PC-9 (cell line): ENCODE measurements at regions of chr12 and their contacts with region 1.

Region 1: GRCh38 chr12:28489246-28489645 is 299.0 kb downstream of the CCDC91 start:
- DNase-seq: no peak
- H3K4me3 ChIP-seq: no peak overlapping the region
- H3K27ac ChIP-seq: no peak overlapping the region
- H3K4me1 ChIP-seq: no peaks in the 10 kb centered on the region
- H3K27me3 ChIP-seq: no peaks in the 10 kb centered on the region
- CTCF ChIP-seq: no peak

Region 2: DNA sequence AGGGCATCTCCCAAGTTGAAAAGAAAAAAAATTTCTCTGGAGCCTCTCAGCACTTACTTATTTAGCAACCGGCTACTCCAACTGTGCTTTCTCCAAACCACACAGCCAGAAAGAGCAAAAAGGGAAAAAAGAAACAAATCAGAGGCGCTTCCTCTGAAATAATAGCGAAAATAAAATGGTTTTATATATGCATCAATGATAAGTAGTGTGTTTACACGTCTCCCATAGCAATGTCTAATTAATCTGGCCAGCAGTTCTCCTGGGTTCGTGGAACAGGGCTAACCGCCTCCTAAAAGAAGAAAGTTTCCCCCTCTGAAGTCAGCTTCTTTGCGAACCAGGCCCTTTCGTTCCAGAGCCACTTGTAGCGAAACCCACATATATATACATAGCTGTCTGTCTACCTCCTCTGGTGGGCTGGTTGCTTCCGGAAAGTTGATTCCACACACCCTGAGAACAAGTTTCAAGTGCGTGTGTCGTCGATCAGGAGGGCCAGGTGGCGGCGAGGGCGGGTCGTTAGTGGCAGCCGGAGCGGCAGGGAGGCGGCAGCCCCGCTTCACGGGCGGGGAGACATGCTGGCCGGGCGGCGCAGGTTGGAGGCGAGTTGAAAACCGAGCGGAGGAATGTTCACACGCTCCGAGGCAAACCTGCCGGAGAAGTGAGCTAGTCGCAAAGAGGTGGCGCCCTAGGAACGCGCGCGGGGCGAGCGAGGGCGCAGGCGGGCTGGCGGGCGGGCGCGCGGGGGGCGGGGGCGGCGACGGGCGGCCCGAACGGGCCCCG is 519.4 kb before region 1 on chr12:
- CTCF ChIA-PET with region 1: no interaction called
- POLR2A ChIA-PET with region 1: no interaction called
- intact Hi-C with region 1: no loop called
- DNase-seq: peak; percentile 74 to 89
- H3K4me3 ChIP-seq: peak overlapping the region; percentile 65
- H3K27ac ChIP-seq: peak overlapping the region; percentile 33
- H3K4me1 ChIP-seq: peaks cover 42% of the 10 kb centered on the region
- H3K27me3 ChIP-seq: no peaks in the 10 kb centered on the region
- CTCF ChIP-seq: no peak; the same call in 1 of the 2 replicates

Region 3: DNA sequence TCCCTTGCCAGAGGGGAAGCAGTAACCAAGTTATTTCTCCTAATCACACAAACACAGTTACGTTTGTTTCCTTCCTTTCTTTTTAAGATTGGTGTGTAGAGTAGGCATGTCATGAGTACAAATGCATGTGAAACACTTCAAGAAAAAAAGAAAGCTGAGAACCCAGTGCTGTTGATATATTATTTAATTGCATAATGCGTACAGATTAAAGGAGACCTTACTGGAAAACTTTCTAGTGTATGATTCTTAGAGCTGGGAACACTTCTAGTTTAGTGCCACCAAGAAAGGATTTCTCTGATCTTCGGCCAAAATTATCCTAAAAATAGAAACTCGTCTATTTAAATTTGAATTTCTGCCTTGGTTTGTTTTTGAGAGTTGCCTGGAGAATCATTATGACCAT is 66.5 kb after region 1 on chr12:
- CTCF ChIA-PET with region 1: interaction called, 11 read pairs
- POLR2A ChIA-PET with region 1: no interaction called
- intact Hi-C with region 1: no loop called
- DNase-seq: no peak
- H3K4me3 ChIP-seq: no peak overlapping the region
- H3K27ac ChIP-seq: no peak overlapping the region
- H3K4me1 ChIP-seq: peaks cover 11% of the 10 kb centered on the region
- H3K27me3 ChIP-seq: no peaks in the 10 kb centered on the region
- CTCF ChIP-seq: no peak

Region 4: GRCh38 chr12:28568118-28568517 is 78.9 kb after region 1 on chr12:
- CTCF ChIA-PET with region 1: no interaction called
- POLR2A ChIA-PET with region 1: no interaction called
- intact Hi-C with region 1: no loop called
- DNase-seq: no peak
- H3K4me3 ChIP-seq: no peak overlapping the region
- H3K27ac ChIP-seq: no peak overlapping the region
- H3K4me1 ChIP-seq: peaks cover 42% of the 10 kb centered on the region
- H3K27me3 ChIP-seq: no peaks in the 10 kb centered on the region
- CTCF ChIP-seq: no peak